H1 (cell line): ENCODE measurements at regions of chr10 and their contacts with region 1.

Region 1: DNA sequence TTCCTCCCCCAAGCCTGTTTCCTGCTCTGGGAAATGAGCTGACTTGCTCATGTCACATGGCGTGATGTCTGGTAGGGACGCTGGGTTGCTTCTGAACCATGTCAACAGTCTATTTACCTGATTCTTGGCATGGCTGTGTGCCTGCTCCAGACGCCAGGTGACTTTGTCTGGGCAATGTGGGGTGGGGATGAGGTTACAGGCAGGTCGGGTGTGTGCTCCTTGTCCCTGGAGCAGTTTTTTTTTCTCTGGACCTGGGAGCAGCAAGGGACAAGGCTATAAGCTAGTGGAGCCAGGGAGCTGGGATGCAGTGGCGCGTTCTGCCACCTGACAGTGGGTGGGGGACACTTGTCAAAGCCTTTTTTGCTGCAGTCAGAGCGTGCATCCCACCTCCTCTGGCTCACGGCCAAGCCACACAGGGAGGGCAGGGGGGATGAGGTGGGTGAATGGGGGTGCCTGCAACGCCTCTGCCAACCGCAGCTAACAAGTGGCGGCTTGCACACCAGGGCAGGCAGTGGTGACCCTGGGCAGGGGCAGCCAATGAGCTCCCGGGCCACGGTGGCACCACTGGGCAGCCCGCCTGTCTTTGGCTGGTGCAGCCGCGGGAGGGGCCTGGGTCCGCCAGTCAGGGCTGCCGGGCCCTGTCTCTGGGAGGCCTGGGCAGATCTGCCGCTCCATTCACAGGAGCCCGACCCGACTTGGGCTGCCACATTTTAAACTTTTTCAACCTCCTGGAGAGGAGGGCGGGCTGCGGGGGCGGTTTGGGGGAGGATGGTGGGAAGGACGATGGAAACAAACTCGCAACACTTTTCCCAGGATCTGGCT is 22.9 kb downstream of the DNAJB12 start:
- DNase-seq: peak; percentile 76 to 88
- H3K4me3 ChIP-seq: peak overlapping the region in 1 of 4 experiments; percentile 39; a peak in 2 of 8 replicates
- H3K27ac ChIP-seq: no peak overlapping the region; the same call in 1 of the 2 replicates
- H3K4me1 ChIP-seq: peaks cover 0 to 36% (median 23%) of the 10 kb centered on the region in 4 experiments; a peak in 6 of 7 replicates
- H3K27me3 ChIP-seq: no peaks in the 10 kb centered on the region
- CTCF ChIP-seq: peak in 2 of 3 experiments; percentile 18 to 57; a peak in 3 of 4 replicates
- EP300 ChIP-seq: no peak
- POLR2A ChIP-seq: no peak; a peak in 1 of 3 replicates
- RAD21 ChIP-seq: peak in 1 of 2 experiments; percentile 25; a peak in 2 of 4 replicates

Region 2: DNA sequence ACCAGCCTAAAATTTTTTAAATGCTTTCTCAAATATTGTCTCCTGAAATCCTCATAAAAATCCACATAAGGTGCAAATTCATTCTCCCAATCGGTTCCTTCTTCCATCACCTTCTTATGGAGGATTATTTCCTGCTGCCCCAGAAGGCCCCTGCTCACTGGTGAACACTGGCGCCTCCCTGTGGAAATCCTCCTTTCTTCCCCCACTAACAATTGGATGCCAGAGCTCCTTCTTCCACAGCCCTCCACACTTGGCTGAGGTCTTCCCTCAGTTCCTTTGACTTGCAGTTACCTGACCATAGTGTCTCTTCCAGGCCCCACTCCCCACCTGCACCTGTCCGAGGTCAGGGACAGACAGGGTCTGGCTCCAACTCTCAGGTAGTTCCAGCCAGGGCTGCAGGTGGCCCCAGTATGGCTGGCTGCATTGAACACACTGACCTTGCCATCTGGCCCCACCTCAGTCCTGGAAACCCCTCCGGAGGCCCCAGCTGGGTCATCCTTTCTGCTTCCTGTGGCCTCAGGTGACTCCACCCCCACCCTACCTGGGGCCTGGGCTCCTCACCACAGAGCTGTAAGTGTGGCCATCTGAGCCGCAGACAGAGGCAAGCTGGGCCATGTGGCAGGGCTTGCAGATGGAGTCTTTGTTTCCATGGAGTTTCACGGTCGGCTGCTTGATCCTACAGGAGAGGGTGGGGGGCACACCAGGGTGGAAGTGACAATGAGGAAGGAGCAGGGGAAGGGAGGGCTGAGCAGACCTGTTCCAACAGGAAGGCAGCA is 261.9 kb before region 1 on chr10:
- CTCF ChIA-PET with region 1: interaction called, 12 read pairs
- POLR2A ChIA-PET with region 1: interaction called, 3 read pairs
- DNase-seq: peak in 1 of 2 experiments; percentile 67
- H3K4me3 ChIP-seq: no peak overlapping the region
- H3K27ac ChIP-seq: 0 out of 2 replicates have a peak overlapping the region, but pooled peaks have one; percentile 11
- H3K4me1 ChIP-seq: peaks cover 0 to 3% (median 0%) of the 10 kb centered on the region in 4 experiments; a peak in 2 of 7 replicates
- H3K27me3 ChIP-seq: no peaks in the 10 kb centered on the region
- CTCF ChIP-seq: peak; percentile 51 to 59 (median 59)
- EP300 ChIP-seq: no peak
- POLR2A ChIP-seq: no peak
- RAD21 ChIP-seq: peak; percentile 59 to 65

Region 3: GRCh38 chr10:72133517-72133916 is 198.3 kb before region 1 on chr10:
- CTCF ChIA-PET with region 1: interaction called, 10 read pairs
- POLR2A ChIA-PET with region 1: no interaction called
- DNase-seq: no peak
- H3K4me3 ChIP-seq: no peak overlapping the region
- H3K27ac ChIP-seq: no peak overlapping the region
- H3K4me1 ChIP-seq: no peaks in the 10 kb centered on the region
- H3K27me3 ChIP-seq: no peaks in the 10 kb centered on the region
- CTCF ChIP-seq: no peak
- EP300 ChIP-seq: no peak
- POLR2A ChIP-seq: no peak
- RAD21 ChIP-seq: no peak

Region 4: GRCh38 chr10:72234560-72235095 is 97.2 kb before region 1 on chr10:
- CTCF ChIA-PET with region 1: interaction called, 18 read pairs
- POLR2A ChIA-PET with region 1: interaction called, 4 read pairs
- DNase-seq: no peak
- H3K4me3 ChIP-seq: no peak overlapping the region
- H3K27ac ChIP-seq: no peak overlapping the region
- H3K4me1 ChIP-seq: peaks cover 0 to under 1% (median 0%) of the 10 kb centered on the region in 4 experiments; a peak in 2 of 7 replicates
- H3K27me3 ChIP-seq: no peaks in the 10 kb centered on the region
- CTCF ChIP-seq: no peak
- EP300 ChIP-seq: no peak
- POLR2A ChIP-seq: no peak
- RAD21 ChIP-seq: no peak

Region 5: DNA sequence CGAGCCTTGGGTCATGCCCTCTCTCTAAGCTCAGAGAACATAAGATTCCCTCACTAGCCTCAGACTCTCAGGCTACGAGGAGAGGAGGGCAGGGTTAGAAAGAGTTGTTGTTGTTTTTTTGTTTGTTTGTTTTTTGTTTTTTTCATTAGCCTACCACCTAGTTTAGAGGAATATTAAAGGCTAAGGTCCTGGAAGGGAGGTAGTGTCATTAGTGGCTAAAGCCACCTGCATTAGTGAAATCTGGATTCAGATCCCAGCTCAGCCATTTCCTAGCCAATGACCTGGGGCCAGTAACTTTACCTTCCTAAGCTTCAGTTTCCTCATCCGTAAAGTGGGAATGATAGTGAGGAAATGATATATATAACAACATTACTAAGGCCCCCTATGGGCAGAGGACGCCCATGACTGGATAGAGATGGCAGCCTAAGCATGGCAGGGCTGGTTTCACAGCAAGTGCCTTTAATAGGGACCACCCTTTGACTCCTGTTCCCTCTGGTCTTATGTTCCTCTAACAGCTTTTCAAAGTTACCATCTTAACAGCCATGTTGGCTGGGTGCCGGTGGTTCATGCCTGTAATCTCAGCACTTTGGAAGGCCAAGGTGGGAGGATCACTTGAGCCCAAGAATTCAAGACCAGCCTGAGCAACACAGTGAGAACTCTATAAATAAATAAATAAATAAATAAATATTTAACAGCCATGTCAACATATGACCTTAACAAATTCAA is 53.0 kb before region 1 on chr10:
- CTCF ChIA-PET with region 1: interaction called, 91 read pairs
- POLR2A ChIA-PET with region 1: interaction called, 895 read pairs
- DNase-seq: no peak
- H3K4me3 ChIP-seq: no peak overlapping the region
- H3K27ac ChIP-seq: no peak overlapping the region
- H3K4me1 ChIP-seq: peaks cover 0 to 15% (median 7%) of the 10 kb centered on the region in 4 experiments; a peak in 6 of 7 replicates
- H3K27me3 ChIP-seq: no peaks in the 10 kb centered on the region
- CTCF ChIP-seq: peak in 2 of 3 experiments; percentile 4 to 5; a peak in 2 of 4 replicates
- EP300 ChIP-seq: no peak
- POLR2A ChIP-seq: no peak
- RAD21 ChIP-seq: no peak

Region 6: DNA sequence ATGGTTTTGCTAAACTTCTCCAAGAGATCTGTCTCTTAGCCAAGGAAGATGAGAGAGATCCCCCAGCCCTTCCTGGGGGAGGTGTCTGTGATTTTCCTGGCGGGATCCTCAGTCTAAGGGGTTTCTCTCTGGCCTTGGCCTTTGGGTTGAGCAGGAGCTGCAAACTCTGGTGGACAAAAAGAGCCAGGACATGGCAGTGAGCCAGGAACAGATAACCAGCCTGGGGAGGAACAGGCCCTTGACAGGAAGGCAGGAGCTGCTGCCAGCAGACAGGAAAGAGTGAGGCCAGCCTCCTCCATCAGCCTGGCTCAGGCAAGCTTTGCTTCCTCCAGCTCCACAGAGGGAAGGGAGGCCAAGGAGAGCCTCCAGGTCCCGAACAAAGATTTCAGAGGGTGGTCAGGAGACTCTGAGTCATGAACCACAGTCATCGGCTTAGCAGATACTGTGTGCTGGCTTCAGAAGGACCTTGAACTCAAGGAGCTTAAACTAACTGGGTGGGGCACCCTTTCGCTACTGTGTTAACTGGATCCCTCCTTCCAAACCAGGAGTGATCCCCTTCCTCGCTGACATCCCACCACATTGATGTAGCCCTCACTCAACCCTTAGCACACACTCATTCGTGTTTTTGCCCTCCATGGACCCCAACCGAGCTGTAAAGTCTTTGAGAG is 23.4 kb before region 1 on chr10:
- CTCF ChIA-PET with region 1: interaction called, 22 read pairs
- POLR2A ChIA-PET with region 1: interaction called, 6 read pairs
- DNase-seq: no peak
- H3K4me3 ChIP-seq: no peak overlapping the region
- H3K27ac ChIP-seq: no peak overlapping the region
- H3K4me1 ChIP-seq: peaks cover 0 to 14% (median 12%) of the 10 kb centered on the region in 4 experiments; a peak in 6 of 7 replicates
- H3K27me3 ChIP-seq: peaks cover 0 to 3% (median 0%) of the 10 kb centered on the region in 4 experiments; a peak in 1 of 7 replicates
- CTCF ChIP-seq: no peak
- EP300 ChIP-seq: no peak
- POLR2A ChIP-seq: no peak
- RAD21 ChIP-seq: no peak

Region 7: DNA sequence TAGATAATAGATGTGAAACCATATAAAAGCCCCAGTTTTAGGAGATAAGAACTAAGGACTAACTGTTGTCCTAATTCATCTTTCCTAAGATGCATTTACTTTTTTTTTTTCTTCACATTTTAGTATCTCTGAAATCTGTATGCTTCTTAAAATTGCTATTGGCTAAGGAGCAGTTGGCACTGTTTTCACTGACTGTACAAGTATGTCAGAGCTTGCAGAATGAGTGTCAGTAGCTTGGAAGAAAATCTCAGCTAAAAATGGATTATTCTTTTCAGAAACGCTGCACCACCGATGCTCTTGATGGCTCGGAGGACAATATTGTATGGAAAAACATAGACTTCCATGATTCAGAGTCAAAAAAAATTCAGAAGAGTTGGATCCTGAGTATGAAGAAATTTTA is 114.0 kb after region 1 on chr10:
- CTCF ChIA-PET with region 1: no interaction called
- POLR2A ChIA-PET with region 1: no interaction called
- DNase-seq: no peak
- H3K4me3 ChIP-seq: no peak overlapping the region
- H3K27ac ChIP-seq: no peak overlapping the region
- H3K4me1 ChIP-seq: no peaks in the 10 kb centered on the region
- H3K27me3 ChIP-seq: no peaks in the 10 kb centered on the region
- CTCF ChIP-seq: no peak
- EP300 ChIP-seq: no peak
- POLR2A ChIP-seq: no peak
- RAD21 ChIP-seq: no peak